ENCODE measurements at regions of chr18 and their contacts with region 1.

Region 1: GRCh38 chr18:35415511-35416073 is 38.5 kb upstream of the ZNF396 start:
- H3K4me3 Mint-ChIP-seq: peak overlapping the region; percentile 69
- H3K27ac Mint-ChIP-seq: peak overlapping the region; percentile 84
- H3K4me1 Mint-ChIP-seq: peaks cover 45% of the 10 kb centered on the region
- H3K27me3 Mint-ChIP-seq: peaks cover 5% of the 10 kb centered on the region

Region 2: GRCh38 chr18:34297287-34297686 is 1118.3 kb before region 1 on chr18:
- intact Hi-C with region 1: no loop called
- H3K4me3 Mint-ChIP-seq: no peak overlapping the region
- H3K27ac Mint-ChIP-seq: no peak overlapping the region
- H3K4me1 Mint-ChIP-seq: no peaks in the 10 kb centered on the region
- H3K27me3 Mint-ChIP-seq: no peaks in the 10 kb centered on the region

Region 3: GRCh38 chr18:35459005-35459441 is 43.4 kb after region 1 on chr18:
- intact Hi-C with region 1: loop called (anchors 5 kb)
- H3K4me3 Mint-ChIP-seq: no peak overlapping the region
- H3K27ac Mint-ChIP-seq: no peak overlapping the region
- H3K4me1 Mint-ChIP-seq: peaks cover 60% of the 10 kb centered on the region
- H3K27me3 Mint-ChIP-seq: peaks cover 3% of the 10 kb centered on the region